ENCODE measurements at regions of chr20 and their contacts with region 1.

Region 1: GRCh38 chr20:48033569-48033968 is 248.3 kb upstream of the SULF2 start:
- DNase-seq: no peak
- ATAC-seq: no peak
- H3K4me3 ChIP-seq: no peak overlapping the region
- H3K4me3 Mint-ChIP-seq: no peak overlapping the region
- H3K27ac ChIP-seq: no peak overlapping the region
- H3K27ac Mint-ChIP-seq: no peak overlapping the region
- H3K4me1 ChIP-seq: peaks cover 0 to 2% of the 10 kb centered on the region in 2 experiments
- H3K4me1 Mint-ChIP-seq: no peaks in the 10 kb centered on the region
- H3K27me3 ChIP-seq: peaks cover 0 to 13% of the 10 kb centered on the region in 2 experiments
- H3K27me3 Mint-ChIP-seq: peaks cover 5 to 12% of the 10 kb centered on the region in 2 donors

Region 2: GRCh38 chr20:47749339-47749738 is 284.2 kb before region 1 on chr20:
- CTCF ChIA-PET with region 1: no interaction called
- POLR2A ChIA-PET with region 1: interaction called in 1 of 2 experiments, 11 read pairs
- DNase-seq: no peak
- ATAC-seq: no peak
- H3K4me3 ChIP-seq: no peak overlapping the region
- H3K4me3 Mint-ChIP-seq: no peak overlapping the region
- H3K27ac ChIP-seq: no peak overlapping the region
- H3K27ac Mint-ChIP-seq: no peak overlapping the region
- H3K4me1 ChIP-seq: peaks cover 7% of the 10 kb centered on the region in 2 experiments
- H3K4me1 Mint-ChIP-seq: peaks cover 12 to 22% (median 18%) of the 10 kb centered on the region in 3 donors
- H3K27me3 ChIP-seq: peaks cover 0 to 17% of the 10 kb centered on the region in 2 experiments
- H3K27me3 Mint-ChIP-seq: peaks cover 0 to 2% of the 10 kb centered on the region in 2 donors

Measured in T-cell (primary cell).